BJ (cell line): ENCODE measurements at regions of chr15 and their contacts with region 1.

Region 1: GRCh38 chr15:63487076-63487757 is 17.2 kb upstream of the USP3 start:
- DNase-seq: no peak
- H3K4me3 ChIP-seq: no peak overlapping the region
- H3K27me3 ChIP-seq: peaks cover 4% of the 10 kb centered on the region; the same call in 1 of the 2 replicates
- CTCF ChIP-seq: peak; percentile 95

Region 2: DNA sequence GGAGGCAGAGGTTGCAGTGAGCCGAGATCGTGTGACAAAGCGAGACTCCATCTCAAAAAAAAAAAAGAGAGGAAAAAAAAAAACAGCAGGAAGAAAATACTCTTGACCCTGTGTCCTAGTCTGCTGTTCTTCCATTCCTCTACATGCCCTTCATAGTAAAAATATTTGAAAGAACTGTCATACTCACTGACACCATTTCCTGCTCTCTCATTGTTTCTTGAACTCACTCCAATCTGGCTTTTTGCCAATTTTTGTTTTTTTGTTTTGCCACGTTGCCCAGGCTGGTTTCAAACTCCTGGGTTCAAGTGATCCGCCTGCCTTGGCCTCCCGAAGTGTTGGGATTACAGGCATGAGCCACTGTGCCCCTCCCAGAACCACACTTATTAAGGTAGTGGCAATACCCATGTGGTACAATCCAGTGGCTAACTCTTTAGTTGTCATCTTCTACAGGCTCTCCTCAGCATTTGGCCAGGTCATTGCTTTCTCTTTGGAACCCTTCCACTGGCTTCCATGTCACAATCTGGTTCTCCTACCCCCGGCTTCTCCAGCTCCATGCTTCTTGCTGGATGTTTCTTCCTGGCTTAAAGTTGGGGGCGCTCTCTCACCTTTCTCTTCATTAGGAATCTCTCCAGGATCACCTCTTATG is 1083.9 kb before region 1 on chr15:
- CTCF ChIA-PET with region 1: no interaction called
- POLR2A ChIA-PET with region 1: no interaction called
- DNase-seq: peak; percentile 47
- H3K4me3 ChIP-seq: no peak overlapping the region
- H3K27me3 ChIP-seq: no peaks in the 10 kb centered on the region
- CTCF ChIP-seq: no peak

Region 3: GRCh38 chr15:63473999-63474809 is 13.0 kb before region 1 on chr15:
- CTCF ChIA-PET with region 1: interaction called, 21 read pairs
- POLR2A ChIA-PET with region 1: no interaction called
- DNase-seq: no peak
- H3K4me3 ChIP-seq: no peak overlapping the region
- H3K27me3 ChIP-seq: no peaks in the 10 kb centered on the region
- CTCF ChIP-seq: no peak

Region 4: DNA sequence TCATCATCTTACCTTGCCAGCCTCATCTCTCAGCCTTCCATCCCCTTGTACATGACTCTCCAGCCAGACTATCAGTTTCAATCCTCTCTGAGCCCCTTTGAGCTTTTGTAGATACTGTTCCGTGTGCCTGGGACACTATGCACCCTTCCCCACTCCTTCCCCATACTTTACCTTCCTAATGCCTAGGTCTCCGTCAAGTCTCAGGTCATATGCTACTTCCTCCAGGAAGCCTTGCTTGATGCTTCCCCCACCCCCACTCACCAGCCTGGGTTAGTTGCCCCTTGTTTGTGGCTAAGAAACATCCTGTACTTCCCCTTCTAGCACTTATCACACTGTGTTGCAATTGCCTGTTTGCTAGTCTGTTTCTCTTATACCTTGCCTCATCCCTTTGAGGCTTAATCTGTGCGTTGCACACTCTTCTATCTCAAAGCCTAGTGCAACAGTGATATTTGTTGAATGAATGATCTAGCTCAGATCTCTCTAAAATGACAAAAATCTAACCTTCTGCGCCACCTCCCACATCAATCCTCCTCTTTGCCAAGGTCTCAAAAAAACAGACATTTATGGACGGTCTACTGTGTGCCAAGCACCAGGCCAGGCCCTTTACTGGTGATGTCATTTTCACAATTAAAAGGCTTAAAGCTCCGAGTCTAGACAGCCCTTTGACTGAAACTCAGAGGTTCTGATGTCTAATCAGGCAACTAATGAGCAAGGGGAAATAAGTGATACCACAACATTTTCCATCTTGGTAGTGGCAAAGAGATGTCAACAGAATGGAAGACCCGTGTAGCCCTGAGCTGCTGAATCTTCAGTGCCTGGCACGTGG is 10.6 kb after region 1 on chr15:
- CTCF ChIA-PET with region 1: interaction called, 22 read pairs
- POLR2A ChIA-PET with region 1: no interaction called
- DNase-seq: no peak
- H3K4me3 ChIP-seq: no peak overlapping the region
- H3K27me3 ChIP-seq: peaks cover 5% of the 10 kb centered on the region
- CTCF ChIP-seq: no peak

Region 5: DNA sequence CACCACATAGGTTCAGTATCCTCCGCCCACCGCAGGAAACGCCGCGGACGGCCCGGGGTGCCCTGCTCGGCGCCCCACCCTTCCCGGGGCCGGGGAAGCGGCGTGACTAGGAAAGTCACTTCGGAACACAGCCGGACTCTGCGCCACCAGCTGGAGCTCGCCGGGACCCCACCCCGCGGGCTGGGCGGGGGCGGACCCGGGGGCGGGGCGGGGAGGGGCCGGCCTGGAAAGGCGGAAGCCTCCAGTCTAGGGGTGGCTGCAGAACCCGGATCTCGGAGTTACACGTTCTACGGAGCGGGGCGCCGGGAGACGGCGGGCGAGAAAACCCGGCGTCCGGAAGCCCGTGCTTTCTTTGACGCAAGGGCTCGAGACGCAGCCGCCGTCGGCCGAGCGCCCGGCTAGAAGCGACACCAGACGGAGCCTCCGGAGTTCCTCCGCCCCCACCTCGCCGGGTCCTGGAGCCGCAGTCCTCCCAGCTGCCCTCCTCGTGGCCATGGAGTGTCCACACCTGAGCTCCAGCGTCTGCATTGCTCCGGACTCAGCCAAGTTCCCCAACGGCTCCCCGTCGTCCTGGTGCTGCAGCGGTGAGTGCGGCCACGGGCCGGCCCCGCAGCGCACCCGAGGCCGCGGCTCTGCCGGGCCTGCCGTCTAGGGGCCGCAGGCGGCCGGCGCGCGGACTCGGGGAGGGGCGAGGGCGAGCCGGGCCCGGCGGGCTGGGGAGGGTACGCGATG is 17.2 kb after region 1 on chr15 and contains the start of gene USP3:
- CTCF ChIA-PET with region 1: interaction called, 11 read pairs
- POLR2A ChIA-PET with region 1: interaction called, 5 read pairs
- DNase-seq: peak; percentile 48
- H3K4me3 ChIP-seq: peak within 1 kb of the TSS; percentile 88
- H3K27me3 ChIP-seq: no peaks in the 10 kb centered on the region
- CTCF ChIP-seq: peak; percentile 26; the same call in 1 of the 2 replicates
- polyA plus RNA-seq, gene USP3: 13.3 and 17.2 TPM in 2 replicates

Region 6: DNA sequence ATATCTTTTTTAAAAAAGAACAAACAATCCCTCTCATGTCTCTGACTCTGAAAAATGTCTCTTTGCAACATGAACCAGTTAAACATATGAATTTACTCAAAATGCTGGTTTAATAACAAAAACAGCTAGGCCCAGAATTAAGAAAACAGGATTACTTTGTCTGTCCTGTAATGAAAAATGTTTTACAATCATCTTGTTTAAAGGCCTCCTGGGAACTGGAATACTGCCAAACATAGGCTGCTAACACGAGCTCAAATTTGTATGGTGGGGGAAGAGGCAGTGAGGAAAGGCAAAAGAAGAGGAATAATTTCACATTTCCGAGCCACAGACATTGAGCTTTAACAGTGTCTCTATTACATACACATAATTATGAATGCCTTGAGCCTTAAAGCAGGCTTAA is 737.3 kb after region 1 on chr15:
- CTCF ChIA-PET with region 1: no interaction called
- POLR2A ChIA-PET with region 1: no interaction called
- DNase-seq: no peak
- H3K4me3 ChIP-seq: no peak overlapping the region
- H3K27me3 ChIP-seq: no peaks in the 10 kb centered on the region
- CTCF ChIP-seq: no peak